Naive thymus-derived CD4-positive, alpha-beta T cell (primary cell): ENCODE measurements at regions of chr5 and their contacts with region 1.

Region 1: GRCh38 chr5:96687812-96688453 is 25.8 kb downstream of the CAST start:
- DNase-seq: peak in 7 of 9 donors; percentile 14 to 47 (median 35)
- ATAC-seq: peak; percentile 84
- H3K4me3 ChIP-seq: no peak overlapping the region
- H3K4me3 Mint-ChIP-seq: peak overlapping the region in 5 of 10 donors; percentile 18 to 65 (median 26)
- H3K27ac ChIP-seq: no peak overlapping the region
- H3K27ac Mint-ChIP-seq: peak overlapping the region in 1 of 9 donors; percentile 47
- H3K4me1 ChIP-seq: no peaks in the 10 kb centered on the region
- H3K4me1 Mint-ChIP-seq: peaks cover 15 to 23% (median 20%) of the 10 kb centered on the region in 7 donors
- H3K27me3 ChIP-seq: no peaks in the 10 kb centered on the region
- H3K27me3 Mint-ChIP-seq: no peaks in the 10 kb centered on the region

Region 2: GRCh38 chr5:96344678-96345577 is 343.0 kb before region 1 on chr5:
- CTCF ChIA-PET with region 1: no interaction called
- POLR2A ChIA-PET with region 1: no interaction called
- intact Hi-C with region 1: loop called in 1 of 2 experiments (anchors 1 kb)
- DNase-seq: peak in 7 of 9 donors; percentile 33 to 70 (median 59)
- ATAC-seq: peak; percentile 91
- H3K4me3 ChIP-seq: no peak overlapping the region
- H3K4me3 Mint-ChIP-seq: peak overlapping the region; percentile 1 to 72 (median 48)
- H3K27ac ChIP-seq: no peak overlapping the region
- H3K27ac Mint-ChIP-seq: peak overlapping the region in 6 of 9 donors; percentile 3 to 53 (median 10)
- H3K4me1 ChIP-seq: peaks cover 6 to 7% of the 10 kb centered on the region in 2 donors
- H3K4me1 Mint-ChIP-seq: peaks cover 5 to 21% (median 18%) of the 10 kb centered on the region in 7 donors
- H3K27me3 ChIP-seq: no peaks in the 10 kb centered on the region
- H3K27me3 Mint-ChIP-seq: peaks cover 0 to 38% (median 8%) of the 10 kb centered on the region in 5 donors

Region 3: GRCh38 chr5:96614110-96614691 is 73.7 kb before region 1 on chr5:
- CTCF ChIA-PET with region 1: interaction called, 24 read pairs
- POLR2A ChIA-PET with region 1: no interaction called
- intact Hi-C with region 1: loop called (anchors 1 kb)
- DNase-seq: peak in 6 of 9 donors; percentile 30 to 51 (median 38)
- ATAC-seq: peak; percentile 72
- H3K4me3 ChIP-seq: no peak overlapping the region
- H3K4me3 Mint-ChIP-seq: no peak overlapping the region
- H3K27ac ChIP-seq: no peak overlapping the region
- H3K27ac Mint-ChIP-seq: no peak overlapping the region
- H3K4me1 ChIP-seq: peaks cover 0 to 5% of the 10 kb centered on the region in 2 donors
- H3K4me1 Mint-ChIP-seq: peaks cover 0 to 5% (median 0%) of the 10 kb centered on the region in 7 donors
- H3K27me3 ChIP-seq: no peaks in the 10 kb centered on the region
- H3K27me3 Mint-ChIP-seq: peaks cover 5 to 43% (median 8%) of the 10 kb centered on the region in 5 donors

Region 4: GRCh38 chr5:96651948-96652753 is 35.8 kb before region 1 on chr5:
- CTCF ChIA-PET with region 1: no interaction called
- POLR2A ChIA-PET with region 1: no interaction called
- intact Hi-C with region 1: loop called in 1 of 2 experiments (anchors 5 kb)
- DNase-seq: no peak
- ATAC-seq: peak; percentile 46
- H3K4me3 ChIP-seq: no peak overlapping the region
- H3K4me3 Mint-ChIP-seq: no peak overlapping the region
- H3K27ac ChIP-seq: no peak overlapping the region
- H3K27ac Mint-ChIP-seq: no peak overlapping the region
- H3K4me1 ChIP-seq: peaks cover 0 to 10% of the 10 kb centered on the region in 2 donors
- H3K4me1 Mint-ChIP-seq: peaks cover 0 to 30% (median 0%) of the 10 kb centered on the region in 7 donors
- H3K27me3 ChIP-seq: no peaks in the 10 kb centered on the region
- H3K27me3 Mint-ChIP-seq: peaks cover 8 to 70% (median 17%) of the 10 kb centered on the region in 5 donors

Region 5: GRCh38 chr5:96677495-96677894 is 10.4 kb before region 1 on chr5:
- CTCF ChIA-PET with region 1: no interaction called
- POLR2A ChIA-PET with region 1: no interaction called
- intact Hi-C with region 1: loop called in 1 of 2 experiments (anchors 2 kb)
- DNase-seq: no peak
- ATAC-seq: no peak
- H3K4me3 ChIP-seq: no peak overlapping the region
- H3K4me3 Mint-ChIP-seq: no peak overlapping the region
- H3K27ac ChIP-seq: no peak overlapping the region
- H3K27ac Mint-ChIP-seq: no peak overlapping the region
- H3K4me1 ChIP-seq: no peaks in the 10 kb centered on the region
- H3K4me1 Mint-ChIP-seq: peaks cover 3 to 25% (median 11%) of the 10 kb centered on the region in 7 donors
- H3K27me3 ChIP-seq: no peaks in the 10 kb centered on the region
- H3K27me3 Mint-ChIP-seq: no peaks in the 10 kb centered on the region

Region 6: DNA sequence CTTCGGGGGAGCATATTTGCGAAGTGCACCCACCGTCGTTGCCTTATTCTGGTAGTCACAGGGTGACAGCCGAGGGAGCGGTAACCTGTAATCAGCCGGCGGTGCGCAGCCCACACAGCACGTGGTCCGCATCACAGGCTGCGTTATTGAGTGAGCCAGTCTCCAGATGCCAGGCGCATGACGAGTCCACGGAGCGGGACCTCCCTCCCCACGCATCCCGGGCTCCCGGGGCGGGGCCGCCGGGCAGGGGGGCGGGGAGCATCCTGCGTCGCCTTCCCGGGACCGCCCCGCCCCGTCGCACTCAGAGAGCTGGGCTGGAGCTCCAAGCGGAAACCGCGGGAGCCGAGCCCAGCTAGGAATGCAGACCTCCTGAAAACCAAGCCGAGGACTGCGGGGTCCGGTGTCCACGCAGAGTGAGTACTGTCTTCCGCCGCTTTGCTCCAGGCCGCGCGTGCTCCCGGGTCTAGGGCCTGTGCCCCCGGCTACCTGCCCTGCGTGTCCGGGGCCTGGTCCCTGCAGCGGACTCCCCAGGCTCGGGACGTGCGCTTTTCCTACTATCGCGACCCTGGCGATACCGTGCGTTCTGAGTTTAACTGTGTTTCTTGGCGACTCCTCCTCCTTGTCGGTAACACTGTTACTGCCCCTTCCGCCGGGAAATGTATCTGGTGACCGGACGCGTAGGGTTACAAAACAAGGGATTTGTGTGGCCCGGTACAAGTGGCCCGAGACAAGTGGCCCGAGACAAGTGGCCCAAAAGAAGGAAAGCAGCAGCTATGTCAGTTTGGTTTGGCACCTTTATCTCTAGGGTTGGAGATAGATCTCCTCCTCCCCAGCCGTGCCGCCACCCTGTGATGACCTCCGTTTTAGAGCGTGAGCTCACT is 14.8 kb after region 1 on chr5:
- CTCF ChIA-PET with region 1: no interaction called
- POLR2A ChIA-PET with region 1: interaction called, 4 read pairs
- intact Hi-C with region 1: loop called in 1 of 2 experiments (anchors 2 kb)
- DNase-seq: peak; percentile 60 to 88 (median 77)
- ATAC-seq: peak; percentile 91
- H3K4me3 ChIP-seq: peak overlapping the region; percentile 75
- H3K4me3 Mint-ChIP-seq: peak overlapping the region; percentile 87 to 98 (median 94)
- H3K27ac ChIP-seq: peak overlapping the region; percentile 82
- H3K27ac Mint-ChIP-seq: peak overlapping the region; percentile 90 to 98 (median 96)
- H3K4me1 ChIP-seq: peaks cover 7 to 20% of the 10 kb centered on the region in 2 donors
- H3K4me1 Mint-ChIP-seq: peaks cover 18 to 56% (median 29%) of the 10 kb centered on the region in 7 donors
- H3K27me3 ChIP-seq: no peaks in the 10 kb centered on the region
- H3K27me3 Mint-ChIP-seq: no peaks in the 10 kb centered on the region